Left ventricle myocardium inferior (tissue), 1 donor: ENCODE measurements at regions of chr12 and their contacts with region 1.

Region 1: DNA sequence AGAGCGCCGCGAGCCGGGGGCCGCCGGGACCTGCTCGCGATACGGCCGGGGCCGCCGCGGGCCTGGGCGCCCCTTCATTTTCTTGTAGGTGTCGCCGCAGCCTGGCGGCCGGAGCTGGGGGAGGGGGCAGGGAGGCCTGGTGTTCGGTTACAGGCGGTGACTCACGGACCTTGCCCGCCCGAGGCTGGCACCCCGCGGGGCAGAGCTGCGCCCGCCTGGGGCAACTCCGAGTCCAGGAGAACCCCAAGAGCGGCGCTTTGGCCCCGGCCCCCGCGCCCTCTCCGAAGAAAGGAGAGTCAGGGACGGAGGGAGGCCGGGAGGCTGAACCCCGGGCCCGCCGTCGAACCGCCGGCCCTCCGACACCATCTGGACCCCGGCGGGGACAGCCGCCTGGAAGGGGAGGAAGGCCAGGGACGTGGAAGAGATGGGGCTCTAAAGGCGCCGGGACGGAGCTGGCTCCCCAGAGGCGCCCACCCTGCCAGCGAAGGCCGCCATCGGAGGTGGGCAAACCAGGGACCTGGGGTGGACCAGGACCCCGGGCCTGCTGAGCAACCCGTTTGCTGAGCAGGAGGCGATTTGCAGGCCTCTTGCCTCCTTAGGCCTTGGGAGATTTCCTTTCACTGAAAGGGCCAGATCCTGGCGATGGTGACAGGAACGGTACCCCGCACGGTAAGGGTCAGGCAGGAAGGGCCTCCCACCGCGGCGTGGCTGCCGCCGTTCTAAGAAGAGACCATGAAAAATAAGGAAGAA is 843 bp upstream of the NUAK1 start:
- DNase-seq: peak; percentile 79
- H3K4me3 ChIP-seq: peak overlapping the region; percentile 95
- H3K27ac ChIP-seq: peak overlapping the region; percentile 98
- H3K4me1 ChIP-seq: peaks cover 92% of the 10 kb centered on the region
- H3K27me3 ChIP-seq: no peaks in the 10 kb centered on the region
- CTCF ChIP-seq: no peak

Region 2: DNA sequence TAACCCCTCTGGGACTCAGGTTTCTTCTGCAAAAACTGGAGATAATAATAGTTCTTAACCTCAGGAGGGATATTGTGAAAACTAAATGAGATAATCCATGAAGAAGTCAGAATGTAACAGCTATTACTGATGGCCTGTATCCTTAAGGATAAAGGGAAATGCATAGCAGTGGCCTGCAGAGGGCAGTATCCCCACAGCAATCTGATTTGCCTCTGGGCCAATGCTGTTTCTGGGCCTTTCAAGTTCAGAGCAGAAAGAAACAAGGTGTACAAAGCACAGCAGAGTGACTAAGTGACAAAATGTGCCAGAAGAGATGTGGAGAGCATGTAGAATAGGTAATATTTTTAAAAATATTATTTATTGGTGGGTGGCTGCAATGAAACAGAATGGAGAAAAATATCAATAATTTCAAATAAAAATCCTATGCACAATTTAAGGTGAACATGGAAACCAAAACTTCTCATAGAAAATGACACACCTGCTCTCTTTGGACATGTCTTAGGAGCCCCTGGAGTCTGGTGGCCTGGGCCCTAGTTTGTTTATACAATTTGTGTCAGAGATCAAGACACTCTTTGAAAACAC is 718.8 kb before region 1 on chr12:
- intact Hi-C with region 1: loop called (anchors 10 kb)
- DNase-seq: peak; percentile 66
- H3K4me3 ChIP-seq: no peak overlapping the region
- H3K27ac ChIP-seq: no peak overlapping the region
- H3K4me1 ChIP-seq: peaks cover 5% of the 10 kb centered on the region
- H3K27me3 ChIP-seq: no peaks in the 10 kb centered on the region
- CTCF ChIP-seq: peak; percentile 90

Region 3: DNA sequence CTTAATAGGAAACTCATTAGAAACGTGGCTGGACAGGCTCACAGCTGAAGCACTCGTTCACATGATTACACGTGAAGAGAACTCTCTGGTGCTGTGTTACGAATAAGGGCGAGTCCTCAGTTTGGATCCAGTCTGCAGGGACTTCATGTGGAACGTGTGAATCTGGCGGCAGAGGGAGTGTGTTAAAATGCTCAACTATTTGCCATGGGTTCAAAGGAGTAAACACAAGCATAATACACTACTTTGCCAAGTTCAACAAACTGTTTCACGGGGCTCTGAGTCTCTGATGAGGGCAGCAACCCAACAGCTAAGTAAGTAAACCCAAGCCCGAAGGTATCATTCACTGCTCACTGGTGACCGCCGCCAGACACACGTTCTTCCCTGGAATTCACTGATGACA is 43.2 kb before region 1 on chr12:
- intact Hi-C with region 1: no loop called
- DNase-seq: no peak
- H3K4me3 ChIP-seq: peak overlapping the region; percentile 16
- H3K27ac ChIP-seq: peak overlapping the region; percentile 93
- H3K4me1 ChIP-seq: peaks cover 99% of the 10 kb centered on the region
- H3K27me3 ChIP-seq: no peaks in the 10 kb centered on the region
- CTCF ChIP-seq: no peak